ENCODE measurements at regions of chr9 and their contacts with region 1.

Region 1: DNA sequence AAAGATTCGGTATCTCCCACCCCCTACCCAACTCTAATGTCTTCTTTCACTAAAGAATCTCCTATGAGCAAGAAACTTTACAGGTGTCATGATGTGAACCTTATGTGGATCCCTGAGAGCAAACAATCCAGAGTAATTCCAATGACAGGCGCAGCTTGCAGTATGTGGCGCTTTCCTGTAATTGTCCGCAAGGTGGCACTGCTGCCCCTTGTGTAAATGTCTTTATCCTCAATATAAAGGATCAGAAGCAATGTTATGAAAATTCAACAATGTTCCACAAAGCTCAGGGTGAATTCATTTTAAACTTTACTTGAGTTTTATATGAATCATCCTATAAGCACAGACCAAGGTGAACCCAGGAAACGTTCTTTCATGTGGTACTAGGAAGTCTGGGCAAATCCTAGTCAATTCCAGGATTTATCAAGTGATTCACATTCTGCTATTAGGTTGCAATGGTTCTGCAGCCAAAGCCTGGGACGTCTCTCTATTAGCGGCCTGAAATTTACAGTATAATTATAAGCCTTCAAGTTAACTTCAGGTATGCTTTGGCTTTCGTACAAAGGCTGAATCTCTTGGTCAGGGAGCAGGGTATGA is 113.7 kb downstream of the TRPM6 start:
- DNase-seq: peak; percentile 38
- ATAC-seq: peak; percentile 57
- H3K4me3 Mint-ChIP-seq: no peak overlapping the region
- H3K27ac Mint-ChIP-seq: no peak overlapping the region
- H3K4me1 Mint-ChIP-seq: no peaks in the 10 kb centered on the region
- H3K27me3 Mint-ChIP-seq: peaks cover 12% of the 10 kb centered on the region
- CTCF ChIP-seq: peak; percentile 32

Region 2: GRCh38 chr9:74952281-74953151 is 178.5 kb after region 1 on chr9 and contains the start of gene C9orf40:
- CTCF ChIA-PET with region 1: interaction called, 17 read pairs
- POLR2A ChIA-PET with region 1: interaction called, 3 read pairs
- intact Hi-C with region 1: loop called (anchors 1 kb)
- DNase-seq: peak; percentile 90
- ATAC-seq: peak; percentile 89
- H3K4me3 Mint-ChIP-seq: peak within 1 kb of the TSS; percentile 99
- H3K27ac Mint-ChIP-seq: peak within 1 kb of the TSS; percentile 95
- H3K4me1 Mint-ChIP-seq: peaks cover 28% of the 10 kb centered on the region
- H3K27me3 Mint-ChIP-seq: no peaks in the 10 kb centered on the region
- CTCF ChIP-seq: peak; percentile 37
- total RNA-seq, gene C9orf40: 4.6 and 5.7 TPM in 2 replicates

Region 3: DNA sequence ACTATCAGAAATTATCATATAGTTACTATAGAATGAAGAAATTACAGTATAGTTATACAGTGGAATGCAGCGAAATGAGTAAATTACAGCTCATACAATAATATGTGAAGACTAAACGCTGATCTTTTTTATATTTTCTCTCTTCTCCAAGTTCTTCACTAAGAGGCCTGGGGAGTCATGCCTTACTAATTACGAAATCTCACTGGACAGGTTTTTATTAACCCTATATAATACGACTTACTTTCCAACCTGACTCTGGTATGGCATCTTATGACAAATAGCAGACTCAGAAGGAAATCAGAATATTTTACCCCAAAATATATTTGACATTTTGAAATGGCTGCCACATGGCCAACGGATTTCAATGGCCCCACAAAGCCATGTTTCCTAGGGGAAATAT is 245.0 kb after region 1 on chr9:
- CTCF ChIA-PET with region 1: interaction called, 12 read pairs
- POLR2A ChIA-PET with region 1: no interaction called
- intact Hi-C with region 1: no loop called
- DNase-seq: no peak
- ATAC-seq: no peak
- H3K4me3 Mint-ChIP-seq: no peak overlapping the region
- H3K27ac Mint-ChIP-seq: no peak overlapping the region
- H3K4me1 Mint-ChIP-seq: peaks cover 20% of the 10 kb centered on the region
- H3K27me3 Mint-ChIP-seq: no peaks in the 10 kb centered on the region
- CTCF ChIP-seq: no peak

Region 4: DNA sequence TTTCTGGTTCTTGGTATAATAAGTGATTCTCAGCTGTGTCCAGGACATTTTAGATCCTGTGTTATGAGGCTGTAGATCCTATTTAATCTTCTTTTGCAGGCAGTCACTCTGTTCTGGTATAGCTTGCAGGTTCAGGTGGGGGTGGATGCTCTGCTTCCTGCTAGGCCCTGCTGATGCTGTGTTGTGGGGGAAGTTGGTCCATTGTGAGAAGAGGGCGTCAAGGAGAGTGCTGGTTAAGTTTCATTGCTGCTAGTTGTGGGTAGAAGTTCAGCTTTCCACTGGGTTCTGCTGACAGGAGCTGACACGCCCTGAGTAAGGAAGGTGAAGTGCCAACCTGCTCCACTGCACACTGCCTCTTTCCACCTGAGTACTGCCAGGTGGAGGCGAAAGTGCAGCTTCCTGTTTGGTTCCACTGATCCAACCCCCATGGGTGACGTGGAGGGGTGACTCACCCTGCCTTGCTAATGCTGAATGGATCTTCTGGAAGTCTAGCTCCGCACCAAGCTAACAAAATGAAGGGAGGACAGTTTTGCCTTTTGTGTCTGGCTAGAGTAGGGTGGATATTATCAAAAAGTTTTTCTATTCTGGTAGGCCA is 297.6 kb after region 1 on chr9:
- CTCF ChIA-PET with region 1: interaction called, 97 read pairs
- POLR2A ChIA-PET with region 1: no interaction called
- intact Hi-C with region 1: no loop called
- DNase-seq: no peak
- ATAC-seq: peak; percentile 52
- H3K4me3 Mint-ChIP-seq: no peak overlapping the region
- H3K27ac Mint-ChIP-seq: no peak overlapping the region
- H3K4me1 Mint-ChIP-seq: peaks cover 9% of the 10 kb centered on the region
- H3K27me3 Mint-ChIP-seq: no peaks in the 10 kb centered on the region
- CTCF ChIP-seq: no peak

Region 5: GRCh38 chr9:75185585-75186170 is 411.7 kb after region 1 on chr9:
- CTCF ChIA-PET with region 1: no interaction called
- POLR2A ChIA-PET with region 1: no interaction called
- intact Hi-C with region 1: loop called (anchors 2 kb)
- DNase-seq: no peak
- ATAC-seq: no peak
- H3K4me3 Mint-ChIP-seq: no peak overlapping the region
- H3K27ac Mint-ChIP-seq: no peak overlapping the region
- H3K4me1 Mint-ChIP-seq: peaks cover 1% of the 10 kb centered on the region
- H3K27me3 Mint-ChIP-seq: no peaks in the 10 kb centered on the region
- CTCF ChIP-seq: no peak

Region 6: GRCh38 chr9:75238311-75238978 is 464.5 kb after region 1 on chr9:
- CTCF ChIA-PET with region 1: interaction called, 4 read pairs
- POLR2A ChIA-PET with region 1: no interaction called
- intact Hi-C with region 1: loop called (anchors 1 kb)
- DNase-seq: no peak
- ATAC-seq: peak; percentile 31
- H3K4me3 Mint-ChIP-seq: no peak overlapping the region
- H3K27ac Mint-ChIP-seq: no peak overlapping the region
- H3K4me1 Mint-ChIP-seq: no peaks in the 10 kb centered on the region
- H3K27me3 Mint-ChIP-seq: peaks cover 2% of the 10 kb centered on the region
- CTCF ChIP-seq: no peak

Measured in activated B cell treated with CpG ODN at 0.5 μM for 24 hours (primary cell).